HCT116 (cell line): ENCODE measurements at regions of chr5 and their contacts with region 1.

Region 1: DNA sequence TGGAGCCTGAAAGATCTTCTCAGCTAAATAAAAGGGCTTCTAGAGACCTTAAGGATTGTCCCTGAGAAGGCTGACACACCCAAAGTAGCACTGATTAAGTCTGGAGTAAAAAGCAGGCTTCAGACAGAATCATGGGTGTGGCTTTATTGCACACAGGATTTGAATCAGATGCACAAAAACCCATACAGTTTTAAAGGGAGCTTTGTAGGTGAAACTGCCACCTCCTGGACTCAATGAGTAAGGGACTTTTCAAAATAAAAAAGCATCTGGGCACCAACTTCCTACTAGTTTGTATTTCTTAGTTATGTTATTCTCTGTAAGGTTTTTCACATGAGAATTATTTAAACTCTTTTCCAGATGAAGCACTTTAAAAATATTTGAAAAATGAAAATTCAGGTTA is 129.4 kb downstream of the EDIL3 start:
- DNase-seq: peak; percentile 47
- ATAC-seq: peak; percentile 80
- H3K4me3 ChIP-seq: no peak overlapping the region
- H3K27ac ChIP-seq: no peak overlapping the region
- H3K4me1 ChIP-seq: peaks cover 0 to 3% of the 10 kb centered on the region in 2 experiments; a peak in 2 of 4 replicates
- H3K27me3 ChIP-seq: no peaks in the 10 kb centered on the region
- CTCF ChIP-seq: peak; percentile 43 to 59 (median 57); a peak in 5 of 6 replicates
- POLR2A ChIP-seq: no peak
- RAD21 ChIP-seq: peak; percentile 61

Region 2: DNA sequence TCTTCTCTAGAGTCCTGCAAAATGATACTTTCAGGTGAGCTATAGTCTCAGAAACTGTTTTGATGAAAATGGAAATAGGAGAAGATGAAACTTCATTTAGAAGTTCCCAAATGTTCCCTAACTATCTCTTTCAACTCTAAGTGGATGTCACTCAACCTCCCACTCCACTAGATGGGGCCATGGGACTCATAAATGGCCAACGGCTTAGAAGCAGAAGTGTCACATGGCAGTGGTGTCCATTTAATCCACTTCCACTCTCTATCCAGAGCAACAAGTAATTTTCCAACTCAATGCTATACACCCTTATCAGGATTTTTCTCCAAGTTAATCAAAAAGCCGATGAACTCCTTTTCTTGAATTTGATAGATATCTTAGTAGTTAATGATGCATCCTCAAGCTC is 166.3 kb before region 1 on chr5:
- CTCF ChIA-PET with region 1: interaction called, 5 read pairs
- POLR2A ChIA-PET with region 1: no interaction called
- RAD21 ChIA-PET with region 1: no interaction called
- intact Hi-C with region 1: loop called (anchors 1 kb)
- DNase-seq: peak; percentile 31
- ATAC-seq: peak; percentile 78
- H3K4me3 ChIP-seq: no peak overlapping the region
- H3K27ac ChIP-seq: no peak overlapping the region
- H3K4me1 ChIP-seq: no peaks in the 10 kb centered on the region
- H3K27me3 ChIP-seq: no peaks in the 10 kb centered on the region
- CTCF ChIP-seq: peak; percentile 35 to 49 (median 48); a peak in 5 of 6 replicates
- POLR2A ChIP-seq: no peak
- RAD21 ChIP-seq: peak; percentile 63